AG04449 (cell line): ENCODE measurements at regions of chr2 and their contacts with region 1.

Region 1: DNA sequence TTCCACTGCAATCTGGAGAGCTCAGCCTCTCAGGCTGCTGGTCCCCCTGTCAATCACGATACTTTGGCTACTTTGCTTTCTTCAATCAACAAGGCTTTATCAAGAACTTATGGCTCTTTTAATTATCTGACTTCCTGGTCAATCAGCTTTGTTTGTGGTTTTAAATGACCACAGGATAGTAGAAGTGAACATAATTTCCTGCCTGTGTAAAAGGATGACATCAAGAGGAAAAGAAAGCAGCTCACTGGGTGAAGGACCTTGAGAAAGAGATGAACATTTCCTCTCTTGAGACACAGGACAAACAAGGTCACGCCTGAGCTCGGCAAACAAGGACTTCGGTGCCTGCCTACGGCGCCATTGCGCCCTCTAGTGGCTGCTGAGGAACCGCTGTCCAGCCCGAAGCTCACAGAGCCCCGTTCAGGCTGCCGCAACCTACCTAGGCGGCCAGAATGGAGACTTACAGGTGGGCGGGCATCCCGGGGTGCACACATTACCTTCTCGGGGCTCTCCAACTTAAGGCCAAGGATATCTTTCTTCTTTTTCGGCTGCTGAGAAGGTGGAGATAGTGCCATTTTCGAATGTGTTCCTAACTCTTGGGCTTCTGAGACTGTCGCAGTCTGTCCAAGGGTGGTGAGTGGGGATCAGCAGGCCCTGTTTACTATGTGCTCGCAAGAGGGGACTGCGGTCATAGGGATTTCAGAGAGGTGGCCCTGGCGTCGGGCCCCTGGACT is 54.0 kb downstream of the IL1RL2 start:
- DNase-seq: peak; percentile 92
- H3K4me3 ChIP-seq: no peak overlapping the region
- CTCF ChIP-seq: peak; percentile 99

Region 2: GRCh38 chr2:101883863-101884262 is 356.9 kb before region 1 on chr2:
- CTCF ChIA-PET with region 1: interaction called, 107 read pairs
- POLR2A ChIA-PET with region 1: no interaction called
- DNase-seq: no peak
- H3K4me3 ChIP-seq: no peak overlapping the region
- CTCF ChIP-seq: peak; percentile 49

Region 3: DNA sequence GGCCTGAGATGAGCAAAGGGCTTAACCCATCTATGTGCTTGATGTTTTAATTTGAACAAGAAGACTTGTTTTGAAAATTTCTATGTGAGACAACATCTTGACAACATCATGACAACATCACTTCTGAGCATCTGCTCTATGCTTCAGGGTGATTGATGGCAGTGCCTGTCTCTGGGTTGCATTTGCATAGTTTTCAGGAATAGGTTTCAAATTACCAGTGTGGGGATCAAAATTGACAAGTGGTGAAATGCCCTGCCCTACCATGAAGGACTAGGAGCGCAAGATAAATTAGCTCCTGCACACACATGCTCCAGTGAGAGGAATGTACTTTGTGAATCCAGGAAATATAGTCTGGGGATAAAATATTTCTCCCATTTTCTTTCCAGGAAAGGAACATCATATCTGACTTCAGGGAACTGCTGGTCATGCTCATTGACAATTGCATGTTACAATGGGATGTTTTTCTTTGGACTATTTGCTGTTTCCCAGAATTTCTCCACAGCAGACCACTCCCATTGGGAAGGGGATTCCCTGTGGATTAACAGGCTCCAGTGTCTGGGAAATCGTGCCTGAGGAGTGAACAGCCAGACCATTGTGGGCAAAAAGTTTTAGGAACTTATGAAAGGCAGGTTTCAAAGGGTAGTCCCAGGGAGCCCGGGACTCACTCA is 294.3 kb before region 1 on chr2:
- CTCF ChIA-PET with region 1: no interaction called
- POLR2A ChIA-PET with region 1: no interaction called
- DNase-seq: no peak
- H3K4me3 ChIP-seq: no peak overlapping the region
- CTCF ChIP-seq: no peak

Region 4: DNA sequence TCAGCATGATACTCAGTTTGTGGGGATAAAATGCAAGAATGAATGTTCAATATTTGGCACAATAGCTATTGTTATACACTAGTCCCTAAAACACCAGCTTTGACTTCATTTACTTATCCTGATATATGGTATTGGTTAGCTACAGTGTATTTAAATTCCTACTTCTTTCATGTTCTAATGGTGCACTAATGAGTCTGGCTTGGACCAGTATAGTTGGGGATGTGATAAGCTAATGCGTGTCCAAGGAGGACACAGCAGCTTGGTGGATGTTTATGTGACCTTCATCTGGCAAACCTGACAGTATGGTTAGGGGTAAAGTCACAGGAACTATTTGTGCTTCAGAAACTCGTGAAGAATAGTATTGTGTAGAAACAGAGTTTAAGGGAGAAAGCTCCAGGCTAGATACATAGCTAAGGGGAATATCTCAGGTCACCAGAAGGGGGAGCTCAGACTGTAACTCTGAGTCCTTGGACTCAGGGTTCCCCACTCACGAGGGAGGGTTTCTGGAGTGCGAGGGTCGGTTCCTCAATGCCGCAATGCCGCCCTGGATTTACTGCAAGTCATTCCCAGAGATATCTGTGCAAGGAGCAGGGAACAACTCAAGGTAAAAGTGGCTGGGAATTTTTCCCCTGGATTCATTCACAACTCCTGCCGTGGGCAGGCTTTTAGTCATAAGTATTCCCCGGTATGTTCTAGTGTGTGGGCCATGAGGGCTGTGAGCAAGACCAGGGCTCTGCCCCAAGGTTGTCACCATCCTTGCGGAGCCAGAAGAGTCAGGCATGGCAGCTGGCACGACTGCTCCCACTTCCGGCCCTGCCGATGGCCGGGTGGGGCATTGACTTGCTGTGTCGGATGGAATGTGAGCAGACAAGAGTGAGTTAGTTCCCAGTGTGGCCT is 234.6 kb before region 1 on chr2:
- CTCF ChIA-PET with region 1: interaction called, 145 read pairs
- POLR2A ChIA-PET with region 1: no interaction called
- DNase-seq: no peak
- H3K4me3 ChIP-seq: no peak overlapping the region
- CTCF ChIP-seq: peak; percentile 64

Region 5: DNA sequence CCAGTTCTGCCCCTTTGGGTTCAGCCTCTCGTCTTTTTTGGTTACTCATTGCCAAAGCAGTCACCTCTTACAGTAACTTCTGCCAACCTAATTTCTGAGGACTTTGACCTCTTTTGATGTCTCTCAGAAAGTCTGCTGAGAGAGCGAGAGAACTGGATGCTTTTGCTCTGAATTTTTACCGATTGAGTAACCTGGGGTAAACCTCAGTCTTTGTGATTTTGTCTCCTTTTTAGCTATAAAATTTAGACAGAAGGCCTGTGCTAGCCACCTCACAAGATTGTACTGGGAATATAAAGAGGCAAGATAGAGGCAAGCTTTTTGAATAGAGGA is 133.1 kb before region 1 on chr2:
- CTCF ChIA-PET with region 1: interaction called, 10 read pairs
- POLR2A ChIA-PET with region 1: no interaction called
- DNase-seq: no peak
- H3K4me3 ChIP-seq: no peak overlapping the region
- CTCF ChIP-seq: no peak

Region 6: DNA sequence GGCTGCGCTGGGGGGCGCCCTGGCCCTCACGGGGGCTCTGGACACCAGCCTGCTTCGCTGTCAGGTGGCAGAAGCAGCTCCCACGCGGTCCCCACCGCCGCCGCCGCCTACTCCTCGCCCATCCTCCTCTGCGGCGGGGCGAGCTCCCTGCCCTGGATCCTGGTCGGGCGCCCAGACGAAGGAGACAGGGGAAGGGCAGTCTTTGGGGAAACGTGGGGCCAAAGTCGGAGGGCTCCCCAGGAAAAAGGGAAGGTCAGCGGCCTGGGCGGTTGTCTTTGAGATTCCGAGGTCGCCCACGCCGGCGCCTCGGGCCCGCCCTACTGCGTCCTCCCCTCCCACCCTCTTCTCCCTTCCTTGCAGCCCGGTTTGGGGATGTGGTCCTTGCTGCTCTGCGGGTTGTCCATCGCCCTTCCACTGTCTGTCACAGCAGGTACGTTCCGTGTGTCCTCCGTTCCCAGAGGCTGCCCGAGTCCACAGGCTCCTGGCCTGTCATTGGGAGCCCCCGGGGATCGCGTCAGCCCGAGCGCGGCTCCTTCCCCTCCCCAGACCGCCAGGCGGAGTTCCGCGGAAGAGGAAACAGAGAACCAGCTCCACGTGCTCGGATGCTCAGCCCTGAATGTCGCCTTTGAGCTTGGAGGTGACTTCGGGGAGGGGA is 53.2 kb before region 1 on chr2:
- CTCF ChIA-PET with region 1: interaction called, 30 read pairs
- POLR2A ChIA-PET with region 1: no interaction called
- DNase-seq: no peak
- H3K4me3 ChIP-seq: peak overlapping the region; percentile 57
- CTCF ChIP-seq: peak; percentile 46

Region 7: DNA sequence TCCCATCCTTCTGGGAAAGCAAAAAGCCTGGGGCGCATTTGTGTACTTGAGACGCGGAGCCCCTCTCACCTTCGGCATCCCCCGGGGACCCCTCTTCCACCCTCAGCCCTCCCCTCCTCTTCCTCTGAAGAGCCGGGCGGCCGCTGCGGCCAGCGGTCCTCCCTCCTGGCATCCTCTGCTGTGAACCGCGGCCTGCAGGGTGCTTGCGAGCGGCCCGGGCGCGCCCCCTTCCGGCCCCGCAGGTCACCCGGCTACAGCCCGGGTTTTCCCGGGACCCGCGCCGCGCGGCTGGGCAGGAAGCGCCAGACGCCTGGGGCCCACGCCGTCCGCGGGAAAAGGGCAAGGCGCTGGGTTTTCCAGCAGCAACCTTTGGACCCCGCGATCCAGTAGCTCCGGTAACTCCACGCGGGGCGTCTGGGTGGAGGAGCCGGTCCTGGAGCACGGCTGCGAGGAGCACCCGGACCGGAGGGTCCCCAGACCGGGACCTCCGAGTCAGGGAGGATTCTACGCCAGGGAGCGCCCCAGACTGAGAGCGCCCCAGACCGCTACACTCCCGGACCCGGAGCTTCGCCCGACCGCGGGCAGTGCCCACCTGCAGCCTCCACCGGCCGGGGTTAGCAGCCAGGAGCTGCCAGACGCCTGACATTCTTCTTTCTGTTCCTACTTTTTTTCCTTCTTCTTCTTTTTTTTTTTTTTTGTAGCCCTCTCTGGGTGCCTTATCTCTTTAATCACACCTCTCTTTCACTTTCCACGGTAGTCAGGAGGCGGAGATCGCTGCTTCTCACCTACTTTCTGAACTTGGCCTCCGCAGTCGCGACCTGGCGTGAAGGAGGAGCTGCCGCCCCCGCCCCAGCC is 114.9 kb after region 1 on chr2 and contains the start of gene IL18R1:
- CTCF ChIA-PET with region 1: interaction called, 51 read pairs
- POLR2A ChIA-PET with region 1: no interaction called
- DNase-seq: no peak
- H3K4me3 ChIP-seq: peak within 1 kb of the TSS; percentile 68
- CTCF ChIP-seq: peak; percentile 94